ENCODE measurements at regions of chr5 and their contacts with region 1.

Region 1: GRCh38 chr5:7878381-7878873 is 9.5 kb downstream of the MTRR start:
- DNase-seq: peak; percentile 28
- H3K4me3 Mint-ChIP-seq: no peak overlapping the region
- H3K27ac Mint-ChIP-seq: peak overlapping the region; percentile 48
- H3K4me1 Mint-ChIP-seq: peaks cover 48% of the 10 kb centered on the region
- H3K27me3 Mint-ChIP-seq: no peaks in the 10 kb centered on the region

Region 2: GRCh38 chr5:7845557-7845956 is 32.9 kb before region 1 on chr5:
- CTCF ChIA-PET with region 1: no interaction called
- intact Hi-C with region 1: no loop called
- DNase-seq: no peak
- H3K4me3 Mint-ChIP-seq: no peak overlapping the region
- H3K27ac Mint-ChIP-seq: no peak overlapping the region
- H3K4me1 Mint-ChIP-seq: peaks cover 2% of the 10 kb centered on the region
- H3K27me3 Mint-ChIP-seq: peaks cover 43% of the 10 kb centered on the region

Region 3: GRCh38 chr5:7894860-7895259 is 16.4 kb after region 1 on chr5:
- CTCF ChIA-PET with region 1: no interaction called
- intact Hi-C with region 1: loop called (anchors 1 kb)
- DNase-seq: no peak
- H3K4me3 Mint-ChIP-seq: no peak overlapping the region
- H3K27ac Mint-ChIP-seq: no peak overlapping the region
- H3K4me1 Mint-ChIP-seq: peaks cover 12% of the 10 kb centered on the region
- H3K27me3 Mint-ChIP-seq: no peaks in the 10 kb centered on the region

Region 4: GRCh38 chr5:8013948-8014710 is 135.7 kb after region 1 on chr5:
- CTCF ChIA-PET with region 1: no interaction called
- intact Hi-C with region 1: no loop called
- DNase-seq: no peak
- H3K4me3 Mint-ChIP-seq: no peak overlapping the region
- H3K27ac Mint-ChIP-seq: no peak overlapping the region
- H3K4me1 Mint-ChIP-seq: no peaks in the 10 kb centered on the region
- H3K27me3 Mint-ChIP-seq: peaks cover 2% of the 10 kb centered on the region

Measured in activated naive CD4-positive, alpha-beta T cell treated with anti-CD3 and anti-CD28 coated beads for 36 hours (primary cell).